ENCODE measurements at regions of chr5 and their contacts with region 1.

Region 1: DNA sequence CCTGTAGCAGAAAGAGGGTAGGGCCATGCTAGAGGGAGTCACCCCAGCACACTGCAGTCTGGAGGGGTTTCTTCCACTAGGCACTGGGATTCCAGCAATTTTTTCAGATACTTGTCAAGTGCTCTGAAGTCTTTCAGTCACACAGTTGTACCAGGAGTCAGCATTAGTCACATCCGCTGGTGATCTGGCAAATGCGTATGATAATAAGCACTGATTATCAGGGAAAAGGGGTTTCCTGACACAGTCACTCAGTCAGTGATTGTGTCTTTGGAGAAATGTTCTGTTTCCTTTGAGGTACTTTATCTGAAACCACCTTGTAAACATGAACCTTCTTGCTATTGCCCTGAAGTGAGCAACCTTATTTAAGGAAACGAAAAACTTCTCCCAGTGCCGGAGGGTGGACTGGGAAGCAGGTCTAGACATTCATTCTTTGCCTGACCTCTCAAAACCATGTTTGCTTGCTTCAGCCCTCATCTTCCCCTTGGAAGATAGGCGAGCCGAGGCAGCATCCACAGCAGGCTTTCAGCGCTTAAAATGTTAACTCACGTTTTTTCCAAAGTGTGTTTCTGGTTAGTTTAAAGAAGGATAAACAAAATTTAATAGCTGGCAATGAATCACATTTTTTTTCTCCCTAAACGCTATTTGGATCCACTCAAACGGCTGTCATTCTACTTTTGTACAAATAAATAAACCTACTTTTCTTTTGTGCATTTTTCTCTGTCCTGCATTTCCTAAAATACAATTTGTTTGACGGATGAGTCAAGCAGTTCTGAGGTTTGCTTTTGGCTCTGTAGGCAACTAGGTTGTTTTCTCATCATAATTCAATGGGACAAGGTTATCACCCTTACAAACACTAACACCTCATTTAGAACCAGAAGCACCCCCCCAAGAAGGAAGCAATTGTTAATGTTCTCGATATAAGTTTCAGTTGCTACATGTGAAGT is 77.7 kb downstream of the FOXD1 start:
- DNase-seq: peak; percentile 95
- ATAC-seq: peak; percentile 86
- H3K4me3 ChIP-seq: peak overlapping the region; percentile 62
- H3K27ac ChIP-seq: peak overlapping the region; percentile 98
- H3K4me1 ChIP-seq: peaks cover 41% of the 10 kb centered on the region
- H3K27me3 ChIP-seq: no peaks in the 10 kb centered on the region
- CTCF ChIP-seq: no peak

Region 2: GRCh38 chr5:73298772-73299630 is 71.9 kb before region 1 on chr5:
- CTCF ChIA-PET with region 1: no interaction called
- POLR2A ChIA-PET with region 1: no interaction called
- intact Hi-C with region 1: loop called (anchors 5 kb)
- DNase-seq: peak; percentile 52
- ATAC-seq: peak; percentile 88
- H3K4me3 ChIP-seq: peak overlapping the region; percentile 69
- H3K27ac ChIP-seq: no peak overlapping the region
- H3K4me1 ChIP-seq: peaks cover 12% of the 10 kb centered on the region
- H3K27me3 ChIP-seq: no peaks in the 10 kb centered on the region
- CTCF ChIP-seq: peak; percentile 44; the same call in 1 of the 2 replicates

Region 3: DNA sequence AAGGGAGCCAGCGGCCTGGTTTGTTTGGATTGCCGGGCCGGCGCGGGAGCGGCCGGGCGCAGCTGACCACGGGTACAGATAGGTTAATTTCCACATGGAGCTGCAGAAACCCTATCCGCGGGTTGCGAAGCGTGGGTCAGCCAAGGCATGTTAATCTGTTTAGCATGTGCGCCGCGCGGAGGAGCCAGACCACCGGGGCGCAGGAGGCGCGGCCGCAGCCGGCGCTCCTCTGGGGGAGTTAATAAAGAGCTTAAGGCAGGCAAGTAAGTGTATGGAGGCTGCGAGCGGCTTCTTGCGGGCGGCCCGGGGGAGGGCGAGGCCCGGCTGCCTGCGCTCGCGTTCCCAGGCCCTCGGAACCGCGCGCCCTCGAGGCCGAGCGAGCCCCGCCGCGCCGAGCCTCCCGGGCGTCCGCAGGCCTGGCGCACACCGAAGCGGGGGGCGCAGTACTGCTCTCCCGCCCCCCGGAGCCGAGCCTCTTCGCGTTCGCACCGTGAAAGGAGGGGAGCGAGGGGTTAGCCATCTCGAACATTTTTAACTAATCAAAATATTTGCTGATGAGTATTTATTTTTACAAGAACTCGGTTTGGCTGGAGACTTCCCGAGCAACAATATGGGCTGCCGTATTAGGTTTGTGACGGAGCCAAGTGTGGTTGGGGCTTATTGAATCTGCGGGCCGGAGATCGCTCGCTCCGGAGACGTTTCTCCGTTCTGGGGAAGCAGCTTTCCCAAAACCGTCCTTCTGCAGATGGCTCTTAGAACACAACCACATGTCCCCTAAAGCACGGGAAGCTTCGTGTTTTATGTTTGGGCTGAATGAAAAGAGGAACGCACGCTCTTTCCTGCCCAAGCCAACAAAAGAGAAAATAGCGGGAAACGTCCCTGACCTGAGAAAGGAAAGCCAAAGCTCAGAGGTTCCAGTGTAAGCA is 48.8 kb after region 1 on chr5:
- CTCF ChIA-PET with region 1: no interaction called
- POLR2A ChIA-PET with region 1: no interaction called
- intact Hi-C with region 1: loop called (anchors 5 kb)
- DNase-seq: no peak
- ATAC-seq: peak; percentile 64
- H3K4me3 ChIP-seq: peak overlapping the region; percentile 66
- H3K27ac ChIP-seq: no peak overlapping the region
- H3K4me1 ChIP-seq: peaks cover 6% of the 10 kb centered on the region; the same call in 1 of the 2 replicates
- H3K27me3 ChIP-seq: 0 out of 2 replicates have a peak, but pooled peaks cover 5% of the 10 kb centered on the region
- CTCF ChIP-seq: no peak

Region 4: GRCh38 chr5:73719632-73720031 is 348.7 kb after region 1 on chr5:
- CTCF ChIA-PET with region 1: no interaction called
- POLR2A ChIA-PET with region 1: no interaction called
- intact Hi-C with region 1: no loop called
- DNase-seq: no peak
- ATAC-seq: no peak
- H3K4me3 ChIP-seq: no peak overlapping the region
- H3K27ac ChIP-seq: no peak overlapping the region
- H3K4me1 ChIP-seq: no peaks in the 10 kb centered on the region
- H3K27me3 ChIP-seq: no peaks in the 10 kb centered on the region
- CTCF ChIP-seq: no peak